Activated CD4-positive, alpha-beta memory T cell treated with anti-CD3 and anti-CD28 coated beads for 36 hours (primary cell): ENCODE measurements at regions of chr20 and their contacts with region 1.

Region 1: GRCh38 chr20:44885392-44886265 is at the start of gene YWHAB:
- DNase-seq: peak; percentile 99
- H3K4me3 Mint-ChIP-seq: peak within 1 kb of the TSS; percentile 85
- H3K27ac Mint-ChIP-seq: peak within 1 kb of the TSS; percentile 82
- H3K4me1 Mint-ChIP-seq: peaks cover 48% of the 10 kb centered on the region
- H3K27me3 Mint-ChIP-seq: no peaks in the 10 kb centered on the region
- total RNA-seq, gene YWHAB: 280 to 284 TPM

Region 2: DNA sequence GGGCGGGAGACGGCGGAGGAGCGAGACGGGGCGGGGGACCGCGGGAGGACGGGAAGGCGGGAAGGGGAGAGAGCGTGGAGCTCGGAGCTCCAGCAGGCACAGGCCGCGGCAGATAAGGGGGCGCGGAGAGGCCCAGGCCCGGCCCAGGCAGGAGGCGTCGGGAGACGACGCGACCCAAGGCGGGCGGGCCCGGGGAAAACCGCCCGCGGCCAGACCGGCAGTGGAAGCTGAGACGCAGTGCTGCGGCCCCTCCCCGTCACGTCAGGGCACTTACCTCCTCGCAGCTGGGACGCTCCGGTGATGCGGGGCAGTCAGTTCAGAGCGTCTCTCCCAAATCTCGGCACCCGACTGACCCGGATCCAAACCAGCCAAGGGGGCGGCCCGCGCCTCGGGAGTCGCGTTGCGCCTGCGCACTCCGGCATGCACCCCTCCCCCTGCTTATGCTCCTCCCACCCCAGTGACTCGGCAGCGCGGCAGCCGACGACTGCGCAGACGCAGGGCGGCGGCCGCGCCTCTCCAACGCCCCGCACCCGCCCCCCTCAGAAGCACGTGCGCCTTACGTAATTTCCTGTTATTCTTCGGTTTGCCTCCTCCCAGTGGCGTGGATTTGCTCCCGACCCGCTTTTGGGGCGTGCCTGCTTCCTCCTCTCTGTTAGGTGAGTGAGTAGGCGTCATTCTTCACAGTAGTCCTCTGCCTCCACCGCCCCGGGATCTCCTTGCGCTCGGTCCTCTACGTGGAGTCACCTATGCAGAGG is 675.0 kb before region 1 on chr20 and contains the start of gene OSER1:
- CTCF ChIA-PET with region 1: no interaction called
- POLR2A ChIA-PET with region 1: no interaction called
- intact Hi-C with region 1: loop called (anchors 10 kb)
- DNase-seq: peak; percentile 99
- H3K4me3 Mint-ChIP-seq: peak within 1 kb of the TSS; percentile 98
- H3K27ac Mint-ChIP-seq: peak within 1 kb of the TSS; percentile 93
- H3K4me1 Mint-ChIP-seq: peaks cover 61% of the 10 kb centered on the region
- H3K27me3 Mint-ChIP-seq: peaks cover 1% of the 10 kb centered on the region
- total RNA-seq, gene OSER1: 23.4 to 24.2 TPM

Region 3: GRCh38 chr20:44901974-44902373 is 16.3 kb after region 1 on chr20:
- CTCF ChIA-PET with region 1: interaction called, 18 read pairs
- POLR2A ChIA-PET with region 1: interaction called, 4 read pairs
- intact Hi-C with region 1: no loop called
- DNase-seq: no peak
- H3K4me3 Mint-ChIP-seq: no peak overlapping the region
- H3K27ac Mint-ChIP-seq: no peak overlapping the region
- H3K4me1 Mint-ChIP-seq: peaks cover 34% of the 10 kb centered on the region
- H3K27me3 Mint-ChIP-seq: no peaks in the 10 kb centered on the region

Region 4: DNA sequence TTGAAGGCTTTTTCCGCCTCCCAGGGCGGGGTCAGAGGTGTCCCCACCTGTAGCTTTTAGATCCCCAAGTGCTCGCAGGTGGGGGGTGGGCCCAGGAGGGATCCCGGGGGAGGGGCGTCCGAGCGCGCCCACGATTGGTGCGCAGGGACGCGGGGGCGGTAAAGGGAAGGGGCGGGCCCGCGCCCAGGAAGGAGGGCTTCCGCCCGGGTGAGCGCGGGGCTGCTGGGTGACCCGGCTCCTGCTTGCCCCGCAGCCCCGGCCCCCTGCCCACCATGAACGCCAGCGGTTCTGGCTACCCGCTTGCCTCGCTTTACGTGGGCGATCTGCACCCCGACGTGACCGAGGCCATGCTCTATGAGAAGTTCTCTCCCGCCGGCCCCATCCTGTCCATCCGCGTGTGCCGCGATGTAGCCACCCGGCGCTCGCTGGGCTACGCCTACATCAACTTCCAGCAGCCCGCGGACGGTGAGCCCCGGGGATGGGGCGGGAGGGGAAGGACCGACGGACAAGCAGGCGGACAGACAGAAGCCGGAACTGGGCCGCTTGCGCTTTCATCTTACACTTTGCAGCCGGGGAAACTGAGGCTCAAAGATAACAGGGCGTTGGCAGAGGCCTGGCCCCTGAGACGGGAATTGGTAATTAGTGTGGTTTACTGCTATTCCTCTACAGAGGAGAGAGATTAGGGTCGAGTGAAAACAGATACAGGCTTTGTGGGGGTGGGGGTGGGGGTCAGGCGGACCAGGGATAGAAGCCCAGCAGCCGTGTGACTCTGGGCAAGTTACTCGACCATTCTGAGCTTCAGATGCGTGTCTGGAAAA is 24.5 kb after region 1 on chr20 and contains the start of gene PABPC1L:
- CTCF ChIA-PET with region 1: interaction called, 7 read pairs
- POLR2A ChIA-PET with region 1: interaction called, 4 read pairs
- intact Hi-C with region 1: loop called (anchors 1 kb)
- DNase-seq: peak; percentile 85
- H3K4me3 Mint-ChIP-seq: peak within 1 kb of the TSS; percentile 88
- H3K27ac Mint-ChIP-seq: peak within 1 kb of the TSS; percentile 60
- H3K4me1 Mint-ChIP-seq: peaks cover 38% of the 10 kb centered on the region
- H3K27me3 Mint-ChIP-seq: no peaks in the 10 kb centered on the region
- total RNA-seq, gene PABPC1L: 61.5 to 70.7 TPM